CD14-positive monocyte (primary cell): ENCODE measurements at regions of chr2 and their contacts with region 1.

Region 1: DNA sequence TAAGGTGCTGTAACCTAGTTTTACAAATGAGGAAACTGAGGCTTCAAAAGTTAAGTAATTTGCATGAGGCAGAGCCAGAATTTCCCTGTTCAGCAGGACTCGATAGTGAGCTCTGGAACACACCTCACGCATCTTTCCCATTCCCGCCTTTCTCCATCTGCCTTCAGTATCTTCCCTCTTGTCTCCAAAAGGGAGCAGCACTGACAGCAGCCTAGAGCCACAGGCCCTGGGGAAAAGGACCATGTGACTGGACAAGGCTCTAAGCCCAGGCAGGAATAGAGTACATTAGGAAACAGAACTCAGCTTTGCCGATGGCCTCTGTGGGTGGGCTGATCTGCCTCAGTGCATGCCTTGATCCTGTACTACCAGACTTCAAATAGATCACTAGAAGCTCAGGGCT is 21.5 kb downstream of the GPR155 start:
- DNase-seq: no peak
- H3K4me3 ChIP-seq: no peak overlapping the region
- H3K4me3 Mint-ChIP-seq: no peak overlapping the region
- H3K27ac ChIP-seq: no peak overlapping the region
- H3K27ac Mint-ChIP-seq: no peak overlapping the region
- H3K4me1 ChIP-seq: no peaks in the 10 kb centered on the region
- H3K4me1 Mint-ChIP-seq: peaks cover 2% of the 10 kb centered on the region
- H3K27me3 ChIP-seq: no peaks in the 10 kb centered on the region
- H3K27me3 Mint-ChIP-seq: peaks cover 0 to 2% (median 0%) of the 10 kb centered on the region in 3 donors
- CTCF ChIP-seq: no peak

Region 2: DNA sequence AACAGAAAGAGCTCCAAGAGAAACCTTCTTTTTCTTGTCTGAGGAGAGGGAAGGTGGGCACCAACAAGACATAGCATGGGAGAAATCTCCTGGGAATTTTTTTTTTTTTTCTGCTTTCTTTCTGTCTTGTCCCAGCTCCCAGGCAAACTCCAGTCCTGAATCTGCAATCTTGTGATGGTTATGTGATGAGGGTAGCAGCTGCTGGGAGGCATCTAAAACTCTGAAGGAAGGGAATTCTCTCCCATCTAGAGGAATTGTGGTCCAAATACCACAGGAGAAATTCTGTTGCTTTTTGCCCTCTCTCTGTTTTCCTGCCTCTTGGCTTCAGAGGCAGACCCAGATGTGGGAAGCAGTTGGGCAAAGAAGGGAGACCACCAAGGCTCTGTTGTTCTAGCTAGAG is 53.1 kb before region 1 on chr2:
- intact Hi-C with region 1: no loop called
- DNase-seq: no peak
- H3K4me3 ChIP-seq: no peak overlapping the region
- H3K4me3 Mint-ChIP-seq: no peak overlapping the region
- H3K27ac ChIP-seq: no peak overlapping the region
- H3K27ac Mint-ChIP-seq: peak overlapping the region in 1 of 7 donors; percentile 15
- H3K4me1 ChIP-seq: no peaks in the 10 kb centered on the region
- H3K4me1 Mint-ChIP-seq: no peaks in the 10 kb centered on the region
- H3K27me3 ChIP-seq: no peaks in the 10 kb centered on the region
- H3K27me3 Mint-ChIP-seq: peaks cover 0 to 2% (median 0%) of the 10 kb centered on the region in 3 donors
- CTCF ChIP-seq: no peak

Region 3: GRCh38 chr2:174546581-174547506 is 81.5 kb after region 1 on chr2:
- intact Hi-C with region 1: loop called (anchors 2 kb)
- DNase-seq: peak; percentile 40 to 56 (median 54)
- H3K4me3 ChIP-seq: no peak overlapping the region
- H3K4me3 Mint-ChIP-seq: no peak overlapping the region
- H3K27ac ChIP-seq: no peak overlapping the region
- H3K27ac Mint-ChIP-seq: peak overlapping the region in 3 of 7 donors; percentile 5 to 36 (median 15)
- H3K4me1 ChIP-seq: no peaks in the 10 kb centered on the region
- H3K4me1 Mint-ChIP-seq: peaks cover 8% of the 10 kb centered on the region
- H3K27me3 ChIP-seq: no peaks in the 10 kb centered on the region
- H3K27me3 Mint-ChIP-seq: peaks cover 7 to 23% (median 11%) of the 10 kb centered on the region in 3 donors
- CTCF ChIP-seq: peak; percentile 65

Region 4: DNA sequence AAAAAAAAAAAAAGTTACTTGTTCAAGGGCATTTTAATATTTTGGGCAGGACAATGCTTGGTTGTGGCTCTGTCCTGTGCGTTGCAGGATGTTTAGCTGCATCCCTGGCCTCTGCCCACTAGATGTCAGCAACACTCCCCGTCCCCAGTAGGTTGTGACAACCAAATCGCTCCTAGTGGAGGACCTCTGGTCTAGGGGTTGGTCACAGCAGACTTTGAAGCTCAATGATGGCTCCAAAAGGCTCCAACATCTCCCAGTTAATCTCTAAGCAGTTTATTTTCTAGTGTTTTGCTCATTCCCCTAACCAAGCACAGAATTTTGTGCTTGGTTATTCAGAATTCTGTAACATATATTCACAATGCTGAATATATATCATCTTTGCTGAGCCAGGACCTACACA is 231.9 kb after region 1 on chr2:
- intact Hi-C with region 1: loop called in 1 of 2 experiments (anchors 10 kb)
- DNase-seq: peak; percentile 59 to 66 (median 64)
- H3K4me3 ChIP-seq: no peak overlapping the region
- H3K4me3 Mint-ChIP-seq: no peak overlapping the region
- H3K27ac ChIP-seq: no peak overlapping the region
- H3K27ac Mint-ChIP-seq: no peak overlapping the region
- H3K4me1 ChIP-seq: no peaks in the 10 kb centered on the region
- H3K4me1 Mint-ChIP-seq: peaks cover 2% of the 10 kb centered on the region
- H3K27me3 ChIP-seq: peaks cover 3 to 8% of the 10 kb centered on the region in 2 donors
- H3K27me3 Mint-ChIP-seq: peaks cover 11 to 16% (median 15%) of the 10 kb centered on the region in 3 donors
- CTCF ChIP-seq: peak; percentile 85